ENCODE measurements at regions of chr9 and their contacts with region 1.

Region 1: DNA sequence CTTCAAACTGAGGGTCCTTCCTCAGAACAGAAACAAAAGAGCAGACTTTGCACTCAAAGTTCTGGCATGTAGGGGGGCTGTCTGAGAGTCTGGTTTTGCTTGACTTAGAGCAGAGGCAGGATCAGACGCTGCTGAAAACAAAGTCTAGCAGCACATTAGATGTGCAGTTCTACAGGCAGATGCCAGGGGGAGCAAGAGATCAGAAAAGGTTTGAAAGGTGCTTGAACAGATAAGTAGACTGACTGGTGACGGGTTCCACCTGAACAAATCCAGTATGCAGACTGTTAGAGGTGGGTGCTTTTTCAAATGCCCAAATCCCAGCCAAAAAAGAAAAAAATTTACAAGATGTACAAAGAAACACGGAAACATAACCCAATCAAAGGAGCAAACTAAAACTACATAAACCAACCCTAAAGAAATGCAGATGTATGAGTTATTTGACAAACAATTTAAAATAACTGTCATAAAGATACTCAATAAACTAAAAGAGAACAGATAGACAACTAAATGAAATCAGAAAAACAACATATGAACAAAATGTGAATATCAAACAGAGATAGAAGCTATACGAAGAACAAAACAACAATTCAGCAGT is 194.7 kb upstream of the FREM1 start:
- DNase-seq: peak in 6 of 7 donors; percentile 17 to 54 (median 24)
- H3K4me3 ChIP-seq: no peak overlapping the region
- H3K27ac ChIP-seq: no peak overlapping the region
- H3K4me1 ChIP-seq: no peaks in the 10 kb centered on the region
- H3K27me3 ChIP-seq: no peaks in the 10 kb centered on the region
- CTCF ChIP-seq: peak; percentile 43 to 66 (median 62)
- POLR2A ChIP-seq: no peak

Region 2: DNA sequence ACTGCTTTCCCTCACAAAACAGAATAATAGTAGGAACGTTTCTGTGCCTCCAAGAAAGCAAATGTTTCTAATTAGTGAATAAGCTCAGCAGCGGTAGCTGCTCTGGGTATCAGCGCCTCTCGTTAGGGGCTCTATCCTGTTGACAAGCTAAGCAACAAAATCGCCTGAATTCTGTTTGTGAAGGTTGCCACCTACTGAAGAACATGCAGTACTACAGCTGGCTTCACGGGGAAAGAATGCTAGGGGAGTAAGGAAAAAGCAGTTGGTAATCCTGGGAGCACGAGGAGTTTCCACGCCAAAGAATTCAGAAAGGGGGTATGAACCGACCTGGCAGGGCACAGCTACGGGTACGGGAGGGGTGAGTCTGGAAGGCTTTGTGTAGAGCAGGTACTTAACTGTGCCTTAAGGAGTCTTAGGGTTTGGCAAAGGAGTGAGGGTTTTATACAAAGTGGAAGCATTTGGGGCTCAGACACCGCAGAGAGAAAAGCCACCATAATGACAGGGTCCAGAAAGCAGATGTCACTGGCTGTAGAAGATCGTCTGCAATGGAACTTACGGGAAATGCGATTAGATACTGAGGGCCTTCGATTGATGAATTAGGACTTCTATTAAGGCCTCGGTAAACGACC is 30.4 kb after region 1 on chr9:
- intact Hi-C with region 1: loop called in 1 of 2 experiments (anchors 2 kb)
- DNase-seq: peak; percentile 42 to 79 (median 60)
- H3K4me3 ChIP-seq: no peak overlapping the region
- H3K27ac ChIP-seq: no peak overlapping the region
- H3K4me1 ChIP-seq: peaks cover 0 to 7% of the 10 kb centered on the region in 2 donors
- H3K27me3 ChIP-seq: no peaks in the 10 kb centered on the region
- CTCF ChIP-seq: peak; percentile 73 to 86 (median 82)
- POLR2A ChIP-seq: no peak

Measured in adrenal gland (tissue), 19 donors.